Left ventricle myocardium inferior (tissue), 1 donor: ENCODE measurements at regions of chr4 and their contacts with region 1.

Region 1: GRCh38 chr4:112633477-112634235 is 3.1 kb downstream of the ZGRF1 start:
- DNase-seq: no peak
- H3K4me3 ChIP-seq: no peak overlapping the region
- H3K27ac ChIP-seq: no peak overlapping the region
- H3K4me1 ChIP-seq: peaks cover 24% of the 10 kb centered on the region
- H3K27me3 ChIP-seq: no peaks in the 10 kb centered on the region
- CTCF ChIP-seq: peak; percentile 61

Region 2: GRCh38 chr4:112765317-112765975 is 131.8 kb after region 1 on chr4:
- intact Hi-C with region 1: loop called (anchors 5 kb)
- DNase-seq: no peak
- H3K4me3 ChIP-seq: no peak overlapping the region
- H3K27ac ChIP-seq: peak overlapping the region; percentile 31
- H3K4me1 ChIP-seq: peaks cover 9% of the 10 kb centered on the region
- H3K27me3 ChIP-seq: no peaks in the 10 kb centered on the region
- CTCF ChIP-seq: peak; percentile 58

Region 3: GRCh38 chr4:113300471-113300928 is 666.8 kb after region 1 on chr4:
- intact Hi-C with region 1: no loop called
- DNase-seq: no peak
- H3K4me3 ChIP-seq: no peak overlapping the region
- H3K27ac ChIP-seq: peak overlapping the region; percentile 80
- H3K4me1 ChIP-seq: peaks cover 48% of the 10 kb centered on the region
- H3K27me3 ChIP-seq: no peaks in the 10 kb centered on the region
- CTCF ChIP-seq: no peak